Activated T-helper 1 cell treated with anti-CD3 and anti-CD28 coated beads, Interleukin-12 subunit alpha, Interleukin-12 subunit beta, Interleukin-2, Interleukin-4 antibody, amounts not matched to agents 30 ng/mL and 10 ng/mL and 1 ng/mL, durations not matched to agents 14 hours and 24 hours and 36 hours (primary cell): ENCODE measurements at regions of chr1 and their contacts with region 1.

Region 1: DNA sequence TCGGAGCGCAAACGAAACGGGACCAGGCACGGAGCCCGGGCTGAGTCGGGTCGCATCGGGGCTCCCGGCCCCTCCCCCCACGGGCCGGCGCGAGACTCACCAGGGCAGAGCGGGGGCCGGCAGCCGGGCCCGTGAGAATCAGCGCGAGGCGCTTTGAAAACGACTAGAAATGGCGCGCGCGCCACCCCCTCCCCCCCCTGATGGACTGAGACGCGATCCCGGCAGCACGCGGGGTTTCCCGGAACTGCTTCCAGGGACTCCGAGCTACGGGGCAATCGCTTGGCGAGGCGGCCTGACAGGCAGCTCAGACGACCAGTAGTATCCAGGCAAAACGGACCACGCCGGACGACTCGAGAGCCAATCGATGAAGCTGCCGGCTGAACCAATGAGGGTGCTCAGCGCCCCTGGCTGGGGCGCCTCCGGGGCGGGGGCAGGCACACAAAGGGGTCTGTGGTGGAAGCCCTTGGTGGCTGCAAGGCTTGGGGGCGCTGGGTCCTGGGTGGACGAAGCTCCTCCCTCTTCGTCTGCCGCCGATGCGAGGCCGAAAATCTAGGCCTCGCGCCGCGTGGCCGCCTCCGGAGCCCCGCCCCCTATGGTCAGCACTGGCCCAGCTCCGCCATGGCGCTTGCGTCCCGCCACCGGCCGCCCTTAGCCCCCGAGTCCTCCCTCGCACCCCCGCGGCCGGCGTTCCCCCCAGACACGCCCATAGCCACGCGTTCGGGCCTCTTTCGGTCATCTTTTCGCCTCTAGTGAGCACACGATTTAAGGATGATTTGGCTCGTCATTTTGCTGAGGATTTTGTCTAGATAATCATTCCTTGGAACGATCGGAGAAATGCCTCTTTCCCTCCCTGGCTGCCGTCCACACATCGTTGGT is at the start of gene HNRNPR:
- DNase-seq: peak; percentile 98
- H3K4me3 Mint-ChIP-seq: peak within 1 kb of the TSS; percentile 94
- H3K27ac Mint-ChIP-seq: peak within 1 kb of the TSS; percentile 100
- H3K4me1 Mint-ChIP-seq: peaks cover 48% of the 10 kb centered on the region
- H3K27me3 Mint-ChIP-seq: peaks cover 2% of the 10 kb centered on the region
- total RNA-seq, gene HNRNPR: 241 and 247 TPM in 2 replicates

Region 2: GRCh38 chr1:23168457-23169194 is 175.7 kb before region 1 on chr1 and contains the start of gene LUZP1:
- intact Hi-C with region 1: loop called (anchors 1 kb)
- DNase-seq: peak; percentile 82
- H3K4me3 Mint-ChIP-seq: peak within 1 kb of the TSS; percentile 99
- H3K27ac Mint-ChIP-seq: peak within 1 kb of the TSS; percentile 93
- H3K4me1 Mint-ChIP-seq: peaks cover 25% of the 10 kb centered on the region
- H3K27me3 Mint-ChIP-seq: no peaks in the 10 kb centered on the region
- total RNA-seq, gene LUZP1: 23.3 and 27.7 TPM in 2 replicates

Region 3: GRCh38 chr1:23484253-23485001 is 140.1 kb after region 1 on chr1:
- intact Hi-C with region 1: loop called (anchors 2 kb)
- DNase-seq: peak; percentile 81
- H3K4me3 Mint-ChIP-seq: peak overlapping the region; percentile 87
- H3K27ac Mint-ChIP-seq: peak overlapping the region; percentile 44
- H3K4me1 Mint-ChIP-seq: peaks cover 16% of the 10 kb centered on the region
- H3K27me3 Mint-ChIP-seq: peaks cover 61% of the 10 kb centered on the region

Region 4: GRCh38 chr1:23743287-23744052 is 399.1 kb after region 1 on chr1 and contains the start of gene ELOA:
- intact Hi-C with region 1: loop called (anchors 10 kb)
- DNase-seq: peak; percentile 77
- H3K4me3 Mint-ChIP-seq: peak within 1 kb of the TSS; percentile 95
- H3K27ac Mint-ChIP-seq: peak within 1 kb of the TSS; percentile 88
- H3K4me1 Mint-ChIP-seq: peaks cover 47% of the 10 kb centered on the region
- H3K27me3 Mint-ChIP-seq: peaks cover 2% of the 10 kb centered on the region
- total RNA-seq, gene ELOA: 54.5 and 55.2 TPM in 2 replicates